ENCODE measurements at regions of chr9 and their contacts with region 1.

Region 1: GRCh38 chr9:8745347-8745746 is 945.8 kb upstream of the DMAC1 start:
- DNase-seq: no peak
- ATAC-seq: no peak
- H3K4me3 ChIP-seq: no peak overlapping the region
- H3K27ac ChIP-seq: no peak overlapping the region
- H3K4me1 ChIP-seq: peaks cover 0 to 3% (median under 1%) of the 10 kb centered on the region in 12 donors
- H3K27me3 ChIP-seq: no peaks in the 10 kb centered on the region
- CTCF ChIP-seq: no peak
- POLR2A ChIP-seq: no peak

Region 2: DNA sequence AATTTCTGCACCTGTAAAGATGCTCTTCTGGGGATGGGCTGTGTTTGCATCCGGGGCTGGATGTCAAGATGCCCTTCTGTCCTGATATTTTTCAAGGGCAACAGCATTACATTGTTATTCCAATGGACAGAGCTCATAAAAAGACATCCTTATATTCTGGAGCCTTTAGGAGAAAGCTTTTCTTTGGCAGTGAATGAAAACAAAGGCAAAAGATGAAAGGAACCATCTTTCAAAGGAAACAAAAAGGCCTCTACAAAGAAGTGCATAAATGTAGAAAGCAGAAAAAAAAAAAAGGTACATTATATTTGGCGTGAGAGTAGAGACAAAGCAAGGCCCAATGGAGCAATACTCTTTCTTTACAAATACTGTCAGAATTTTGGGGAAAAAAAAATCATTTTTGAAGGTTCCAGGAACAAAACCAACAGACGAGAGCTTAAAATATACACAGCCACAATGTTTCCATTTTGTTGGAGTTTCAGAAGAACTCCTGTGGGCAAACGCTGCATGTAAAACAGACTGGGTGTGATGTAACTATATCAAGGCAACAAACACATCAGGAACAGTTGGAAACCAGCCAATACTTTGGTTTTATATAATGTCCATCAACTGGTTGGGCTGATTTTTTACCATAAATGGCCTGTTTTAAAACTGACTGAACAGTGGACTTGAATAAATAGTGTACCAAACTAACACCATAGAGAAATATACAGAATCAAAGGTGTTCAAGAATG is 60.2 kb before region 1 on chr9:
- intact Hi-C with region 1: loop called in 1 of 10 experiments (anchors 10 kb)
- DNase-seq: no peak
- ATAC-seq: no peak
- H3K4me3 ChIP-seq: no peak overlapping the region
- H3K27ac ChIP-seq: no peak overlapping the region
- H3K4me1 ChIP-seq: peaks cover 0 to 12% (median 0%) of the 10 kb centered on the region in 12 donors
- H3K27me3 ChIP-seq: no peaks in the 10 kb centered on the region
- CTCF ChIP-seq: no peak
- POLR2A ChIP-seq: no peak

Region 3: DNA sequence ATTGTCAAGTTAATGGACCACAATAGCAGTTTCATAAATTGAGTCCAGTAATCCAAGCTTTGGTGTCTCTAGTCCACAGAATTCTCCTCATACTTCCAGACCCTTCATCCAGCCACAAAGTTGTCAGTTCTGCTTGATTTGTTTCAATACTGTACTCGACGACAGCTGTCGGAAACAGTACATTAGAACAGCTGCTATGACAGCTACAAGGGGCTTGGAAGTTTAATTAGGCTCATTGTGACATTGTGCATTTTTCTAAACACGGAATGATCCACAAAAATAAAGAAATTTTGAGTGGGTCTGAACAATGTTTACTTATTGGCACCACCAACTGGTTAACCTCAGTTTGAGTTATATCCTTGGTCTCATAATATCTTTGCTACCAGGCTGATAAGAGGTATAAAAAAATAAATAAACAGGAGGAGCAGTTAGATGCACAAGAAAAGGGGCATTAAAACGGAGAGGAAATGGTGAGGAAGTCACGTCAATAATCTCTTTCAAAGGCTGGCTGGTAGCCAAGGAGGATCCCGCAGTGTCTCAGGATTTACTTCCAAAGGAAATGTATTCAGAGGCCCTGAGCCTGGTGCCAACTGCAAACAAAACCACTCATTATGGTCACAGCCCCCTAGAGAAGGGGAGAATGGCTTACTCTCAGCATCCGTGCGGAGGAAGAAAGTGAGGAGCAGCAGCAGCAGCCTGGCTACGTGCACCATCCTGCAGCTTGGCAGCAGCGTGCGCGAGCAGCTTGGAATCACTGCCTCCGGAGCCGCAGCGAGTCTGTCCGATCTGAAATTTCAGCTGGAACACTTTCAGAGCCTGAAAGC is 12.0 kb before region 1 on chr9:
- intact Hi-C with region 1: no loop called
- DNase-seq: peak; percentile 18 to 64 (median 40)
- ATAC-seq: peak in 3 of 4 donors; percentile 52 to 71 (median 63)
- H3K4me3 ChIP-seq: peak overlapping the region in 10 of 12 donors; percentile 6 to 50 (median 28)
- H3K27ac ChIP-seq: peak overlapping the region in 1 of 12 donors; percentile 8
- H3K4me1 ChIP-seq: peaks cover 0 to 7% (median 0%) of the 10 kb centered on the region in 12 donors
- H3K27me3 ChIP-seq: no peaks in the 10 kb centered on the region
- CTCF ChIP-seq: no peak
- POLR2A ChIP-seq: no peak

Measured in heart left ventricle (tissue), 16 donors.